ENCODE measurements at regions of chr1 and their contacts with region 1.

Region 1: DNA sequence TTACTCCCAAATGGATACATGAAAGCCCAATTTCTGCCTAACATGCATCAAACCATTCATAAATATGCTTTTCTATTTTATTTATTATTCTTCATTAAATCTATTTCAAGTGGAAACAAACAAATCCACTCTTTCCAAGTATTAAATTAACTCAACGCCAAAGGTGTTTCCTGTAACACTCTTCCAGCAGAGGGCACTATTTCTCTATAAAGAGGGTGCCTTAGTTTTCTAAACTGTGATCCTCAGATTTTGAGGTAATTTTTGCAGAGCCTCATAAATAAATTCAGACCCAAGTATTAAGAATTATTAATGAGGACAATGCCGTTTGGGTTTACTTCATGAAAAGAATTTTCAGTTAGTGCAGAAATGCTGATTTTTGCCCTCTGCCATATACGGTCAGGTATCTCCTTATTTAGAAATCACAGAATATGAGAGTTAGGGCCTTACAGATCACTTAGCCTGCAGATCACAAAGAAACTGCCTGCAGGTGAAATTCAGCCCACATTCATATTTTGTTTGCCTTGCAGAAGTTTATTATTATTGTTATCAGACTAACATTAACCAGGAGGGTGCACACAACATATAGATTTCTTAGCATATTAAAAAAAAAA is 40.1 kb upstream of the MYSM1 start:
- DNase-seq: peak; percentile 35 to 74 (median 54)
- H3K4me3 ChIP-seq: no peak overlapping the region
- H3K4me3 Mint-ChIP-seq: no peak overlapping the region
- H3K27ac ChIP-seq: peak overlapping the region in 1 of 2 donors; percentile 63
- H3K27ac Mint-ChIP-seq: no peak overlapping the region
- H3K4me1 ChIP-seq: peaks cover 16 to 25% of the 10 kb centered on the region in 2 donors
- H3K4me1 Mint-ChIP-seq: peaks cover 24% of the 10 kb centered on the region
- H3K27me3 ChIP-seq: no peaks in the 10 kb centered on the region
- H3K27me3 Mint-ChIP-seq: peaks cover 2 to 3% (median 2%) of the 10 kb centered on the region in 3 donors
- CTCF ChIP-seq: peak; percentile 92

Region 2: GRCh38 chr1:59707178-59707791 is 967.3 kb after region 1 on chr1:
- intact Hi-C with region 1: loop called in 1 of 2 experiments (anchors 10 kb)
- DNase-seq: no peak
- H3K4me3 ChIP-seq: no peak overlapping the region
- H3K4me3 Mint-ChIP-seq: no peak overlapping the region
- H3K27ac ChIP-seq: no peak overlapping the region
- H3K27ac Mint-ChIP-seq: no peak overlapping the region
- H3K4me1 ChIP-seq: peaks cover 3 to 5% of the 10 kb centered on the region in 2 donors
- H3K4me1 Mint-ChIP-seq: peaks cover 10% of the 10 kb centered on the region
- H3K27me3 ChIP-seq: no peaks in the 10 kb centered on the region
- H3K27me3 Mint-ChIP-seq: peaks cover 0 to 2% (median 0%) of the 10 kb centered on the region in 3 donors
- CTCF ChIP-seq: no peak

Region 3: GRCh38 chr1:59759156-59759925 is 1019.4 kb after region 1 on chr1:
- intact Hi-C with region 1: loop called (anchors 5 to 10 kb)
- DNase-seq: peak; percentile 67 to 80 (median 73)
- H3K4me3 ChIP-seq: peak overlapping the region in 2 of 3 experiments; percentile 23 to 63
- H3K4me3 Mint-ChIP-seq: peak overlapping the region; percentile 72 to 91
- H3K27ac ChIP-seq: no peak overlapping the region
- H3K27ac Mint-ChIP-seq: peak overlapping the region in 2 of 7 donors; percentile 3 to 8
- H3K4me1 ChIP-seq: peaks cover 6 to 7% of the 10 kb centered on the region in 2 donors
- H3K4me1 Mint-ChIP-seq: peaks cover 8% of the 10 kb centered on the region
- H3K27me3 ChIP-seq: no peaks in the 10 kb centered on the region
- H3K27me3 Mint-ChIP-seq: peaks cover 0 to 2% (median 1%) of the 10 kb centered on the region in 3 donors
- CTCF ChIP-seq: peak; percentile 94